ENCODE measurements at regions of chr1 and their contacts with region 1.

Region 1: DNA sequence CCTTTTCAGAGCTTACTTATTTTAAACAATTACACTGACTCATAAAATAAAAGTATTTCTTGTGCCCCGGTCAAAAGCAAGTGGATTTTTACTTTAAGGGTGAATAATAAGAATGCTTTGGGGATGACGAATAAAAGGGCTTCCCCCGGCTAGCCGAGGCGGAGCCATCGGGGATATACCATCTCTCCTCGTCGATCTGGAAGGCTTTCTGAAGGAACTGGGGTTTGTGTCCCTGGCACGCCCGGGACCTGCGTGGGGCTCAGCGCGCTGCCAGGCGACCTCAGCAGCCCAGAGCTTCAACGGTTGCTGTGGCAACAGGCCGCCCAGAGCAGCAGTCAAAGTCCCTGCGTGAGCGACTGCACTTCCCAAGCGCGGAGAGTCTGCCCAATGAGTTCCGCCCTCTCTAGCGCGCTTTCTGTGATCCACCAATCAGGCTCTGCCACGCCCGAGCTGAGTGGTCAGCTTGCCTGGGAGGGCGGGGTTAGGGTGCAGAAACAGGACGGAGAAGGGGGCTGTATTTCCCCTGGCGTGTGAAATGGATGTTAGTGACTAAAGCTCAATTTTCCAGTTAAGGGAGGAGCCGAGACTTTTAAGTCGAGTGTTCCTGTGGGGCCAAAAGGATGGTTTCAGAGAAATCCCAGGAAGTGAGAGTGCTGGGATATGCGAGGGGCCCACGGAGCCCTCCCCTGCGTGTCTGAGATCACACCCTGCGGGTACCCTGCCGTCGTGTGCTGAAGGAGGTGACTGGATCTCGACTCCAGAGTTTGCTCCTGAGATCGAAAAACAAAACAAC is 33.0 kb upstream of the MGST3 start:
- DNase-seq: peak; percentile 95
- ATAC-seq: peak; percentile 99
- H3K4me3 Mint-ChIP-seq: peak overlapping the region; percentile 90
- H3K27ac Mint-ChIP-seq: peak overlapping the region; percentile 90
- H3K4me1 Mint-ChIP-seq: peaks cover 19% of the 10 kb centered on the region
- H3K27me3 Mint-ChIP-seq: peaks cover 30% of the 10 kb centered on the region

Region 2: GRCh38 chr1:165392634-165393571 is 205.2 kb before region 1 on chr1:
- CTCF ChIA-PET with region 1: interaction called, 155 read pairs
- POLR2A ChIA-PET with region 1: interaction called, 3 read pairs
- DNase-seq: peak; percentile 93
- ATAC-seq: peak; percentile 98
- H3K4me3 Mint-ChIP-seq: peak overlapping the region; percentile 65
- H3K27ac Mint-ChIP-seq: peak overlapping the region; percentile 87
- H3K4me1 Mint-ChIP-seq: peaks cover 17% of the 10 kb centered on the region
- H3K27me3 Mint-ChIP-seq: peaks cover 79% of the 10 kb centered on the region

Region 3: GRCh38 chr1:165409657-165410358 is 188.3 kb before region 1 on chr1:
- CTCF ChIA-PET with region 1: interaction called, 32 read pairs
- POLR2A ChIA-PET with region 1: no interaction called
- DNase-seq: no peak
- ATAC-seq: no peak
- H3K4me3 Mint-ChIP-seq: no peak overlapping the region
- H3K27ac Mint-ChIP-seq: no peak overlapping the region
- H3K4me1 Mint-ChIP-seq: no peaks in the 10 kb centered on the region
- H3K27me3 Mint-ChIP-seq: peaks cover 40% of the 10 kb centered on the region

Region 4: DNA sequence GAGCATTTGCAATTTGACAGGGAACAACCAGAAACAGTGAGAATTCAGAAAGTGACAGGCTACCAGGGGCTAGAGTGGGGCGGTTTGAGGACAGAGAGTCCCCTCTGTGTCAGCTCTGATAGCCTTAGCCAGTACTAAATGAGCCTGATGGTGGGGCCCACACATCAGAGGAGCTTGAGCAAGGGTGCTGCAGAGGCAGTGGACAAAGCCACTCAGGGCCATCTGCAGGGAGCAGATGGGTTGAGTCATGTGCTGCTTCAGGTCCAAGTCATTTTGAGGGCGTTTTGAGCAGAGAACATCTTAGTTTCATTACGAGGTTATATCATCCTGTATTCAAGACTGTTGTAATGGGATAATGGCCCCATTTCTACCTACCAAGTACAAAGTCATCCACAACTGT is 46.6 kb before region 1 on chr1:
- CTCF ChIA-PET with region 1: no interaction called
- POLR2A ChIA-PET with region 1: no interaction called
- DNase-seq: no peak
- ATAC-seq: no peak
- H3K4me3 Mint-ChIP-seq: no peak overlapping the region
- H3K27ac Mint-ChIP-seq: no peak overlapping the region
- H3K4me1 Mint-ChIP-seq: no peaks in the 10 kb centered on the region
- H3K27me3 Mint-ChIP-seq: peaks cover 30% of the 10 kb centered on the region

Region 5: DNA sequence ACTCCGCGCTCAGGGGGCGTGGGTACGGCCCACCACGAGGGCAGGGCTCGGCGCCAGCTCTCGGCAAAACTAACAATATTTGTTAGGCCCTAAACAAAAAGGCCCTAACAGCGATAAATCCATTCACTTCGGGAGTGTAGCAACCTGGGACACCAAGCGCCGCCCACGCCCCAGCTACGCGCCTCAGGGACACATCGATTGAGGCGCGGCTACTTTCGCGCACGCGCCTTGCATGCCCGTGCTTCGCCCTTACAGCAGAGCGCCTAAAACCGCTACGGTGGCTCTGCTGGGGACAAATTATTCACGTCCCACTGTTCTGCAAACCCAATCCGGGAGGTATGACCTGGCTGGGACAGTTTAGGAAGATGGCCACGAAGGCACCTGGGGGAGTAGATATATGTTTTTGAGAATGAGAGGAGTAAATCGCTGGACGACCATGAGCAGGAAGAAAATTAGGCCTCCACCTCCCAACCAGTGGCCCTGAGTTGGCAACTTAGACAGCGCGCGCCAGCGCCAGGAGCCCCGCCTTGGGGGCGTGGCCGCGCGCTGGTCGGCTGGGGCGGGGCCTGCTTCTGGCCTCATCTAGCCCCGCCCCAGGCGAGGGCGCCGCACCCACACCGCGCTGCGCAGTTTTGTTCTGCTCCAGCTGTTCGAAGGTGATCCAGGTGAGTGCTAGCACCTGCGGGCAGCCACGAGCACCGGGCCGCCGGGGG is 32.7 kb after region 1 on chr1 and contains the start of gene MGST3:
- CTCF ChIA-PET with region 1: interaction called, 14 read pairs
- POLR2A ChIA-PET with region 1: no interaction called
- DNase-seq: peak; percentile 91
- ATAC-seq: peak; percentile 97
- H3K4me3 Mint-ChIP-seq: no peak within 1 kb of the TSS
- H3K27ac Mint-ChIP-seq: peak within 1 kb of the TSS; percentile 58
- H3K4me1 Mint-ChIP-seq: peaks cover 7% of the 10 kb centered on the region
- H3K27me3 Mint-ChIP-seq: peaks cover 10% of the 10 kb centered on the region
- total RNA-seq, gene MGST3: 30.9 to 33.0 TPM

Region 6: DNA sequence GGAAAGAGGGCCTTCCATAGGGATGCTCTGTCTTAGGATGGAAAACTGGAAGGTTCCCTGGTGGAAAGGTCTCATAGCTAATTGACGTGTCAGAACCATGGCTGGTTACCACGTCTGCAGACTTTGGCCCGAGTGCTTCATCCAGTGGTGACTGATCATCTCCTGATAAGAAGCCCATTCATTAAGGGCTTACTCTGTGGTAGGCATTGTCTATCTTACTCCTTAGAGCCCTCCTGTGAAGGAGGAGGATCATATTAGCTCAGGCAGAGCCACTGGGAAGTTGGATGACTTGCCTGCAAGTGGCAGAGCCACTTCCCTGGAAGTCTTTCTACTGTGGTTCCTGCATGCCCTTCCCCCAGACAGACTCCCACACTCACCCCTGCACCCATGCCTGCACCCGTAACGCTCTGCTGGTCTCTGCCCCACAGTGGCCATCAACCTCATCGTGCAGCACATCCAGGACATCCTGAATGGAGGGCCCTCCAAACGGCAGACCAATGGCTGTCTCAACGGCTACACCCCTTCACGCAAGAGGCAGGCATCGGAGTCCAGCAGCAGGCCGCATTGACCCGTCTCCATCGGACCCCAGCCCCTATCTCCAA is 309.3 kb after region 1 on chr1:
- CTCF ChIA-PET with region 1: interaction called, 92 read pairs
- POLR2A ChIA-PET with region 1: no interaction called
- DNase-seq: no peak
- ATAC-seq: no peak
- H3K4me3 Mint-ChIP-seq: no peak overlapping the region
- H3K27ac Mint-ChIP-seq: no peak overlapping the region
- H3K4me1 Mint-ChIP-seq: peaks cover 7% of the 10 kb centered on the region
- H3K27me3 Mint-ChIP-seq: no peaks in the 10 kb centered on the region